ENCODE measurements at regions of chr16 and their contacts with region 1.

Region 1: DNA sequence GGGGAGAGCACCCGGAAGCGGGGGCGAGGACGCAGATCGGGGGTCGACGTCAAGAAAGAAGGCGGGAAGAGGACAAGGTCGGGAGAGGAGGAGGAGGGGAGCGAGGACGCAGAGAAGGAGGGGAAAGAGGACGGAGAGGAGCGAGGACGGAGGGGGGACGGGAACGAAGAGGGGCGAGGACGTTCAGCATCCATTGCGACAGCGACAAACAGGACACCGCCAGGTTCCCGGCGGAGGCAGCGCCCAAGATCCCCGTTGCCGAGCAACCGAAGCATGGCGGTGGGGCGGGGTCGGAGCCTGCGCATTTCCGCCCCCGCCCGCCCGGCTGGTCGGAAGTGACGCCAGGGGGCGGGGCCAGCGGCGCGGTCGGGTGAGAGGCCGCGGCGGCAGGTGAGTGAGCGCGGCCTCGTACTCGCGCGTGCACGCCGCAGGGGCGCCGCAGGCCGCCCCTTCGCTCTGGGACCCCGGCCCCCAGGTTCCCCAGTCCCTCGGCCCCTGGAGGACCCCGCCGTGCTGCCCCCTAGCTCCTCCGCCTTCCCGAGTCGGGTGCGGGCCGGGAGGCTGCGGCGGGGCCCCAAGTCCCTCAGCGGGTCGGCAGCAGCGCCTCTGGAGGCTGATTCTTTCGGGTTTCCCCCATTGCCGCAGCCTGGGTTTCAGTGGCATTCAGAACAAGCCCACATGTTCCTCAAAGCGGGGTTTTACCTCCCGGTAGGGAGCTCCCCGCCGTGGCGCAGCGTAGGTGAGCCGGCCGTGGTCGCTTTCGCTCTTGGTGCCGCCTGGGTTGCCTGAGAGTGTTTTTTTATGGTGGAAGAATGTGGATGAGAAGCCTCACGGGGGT is at the start of gene FAM234A:
- DNase-seq: peak; percentile 88 to 99 (median 94)
- ATAC-seq: peak; percentile 87
- H3K4me3 ChIP-seq: peak within 1 kb of the TSS; percentile 62
- H3K4me3 Mint-ChIP-seq: peak within 1 kb of the TSS; percentile 93
- H3K27ac ChIP-seq: peak within 1 kb of the TSS; percentile 98
- H3K27ac Mint-ChIP-seq: peak within 1 kb of the TSS; percentile 100
- H3K4me1 ChIP-seq: peaks cover 20% of the 10 kb centered on the region
- H3K4me1 Mint-ChIP-seq: peaks cover 17% of the 10 kb centered on the region
- H3K27me3 ChIP-seq: no peaks in the 10 kb centered on the region
- H3K27me3 Mint-ChIP-seq: no peaks in the 10 kb centered on the region
- CTCF ChIP-seq: peak; percentile 63
- total RNA-seq, gene FAM234A: 15.6 to 17.0 TPM

Region 2: GRCh38 chr16:53346-54236 is 181.1 kb before region 1 on chr16 and contains the starts of genes POLR3K and SNRNP25:
- CTCF ChIA-PET with region 1: no interaction called
- POLR2A ChIA-PET with region 1: no interaction called
- intact Hi-C with region 1: loop called in 1 of 2 experiments (anchors 1 kb)
- DNase-seq: peak; percentile 95 to 99 (median 98)
- ATAC-seq: peak; percentile 95
- H3K4me3 ChIP-seq: peak within 1 kb of the TSS; percentile 86
- H3K4me3 Mint-ChIP-seq: peak within 1 kb of the TSS; percentile 94
- H3K27ac ChIP-seq: peak within 1 kb of the TSS; percentile 25 to 31
- H3K27ac Mint-ChIP-seq: peak within 1 kb of the TSS; percentile 72
- H3K4me1 ChIP-seq: peaks cover 33% of the 10 kb centered on the region
- H3K4me1 Mint-ChIP-seq: peaks cover 32% of the 10 kb centered on the region
- H3K27me3 ChIP-seq: no peaks in the 10 kb centered on the region
- H3K27me3 Mint-ChIP-seq: no peaks in the 10 kb centered on the region
- CTCF ChIP-seq: no peak
- total RNA-seq, gene POLR3K: 4.1 TPM
- total RNA-seq, gene SNRNP25: 4.8 to 5.1 TPM

Region 3: GRCh38 chr16:138049-138417 is 96.7 kb before region 1 on chr16:
- CTCF ChIA-PET with region 1: no interaction called
- POLR2A ChIA-PET with region 1: no interaction called
- intact Hi-C with region 1: loop called in 1 of 2 experiments (anchors 2 kb)
- DNase-seq: peak in 12 of 14 experiments; percentile 7 to 56 (median 20)
- ATAC-seq: no peak
- H3K4me3 ChIP-seq: peak overlapping the region; percentile 66
- H3K4me3 Mint-ChIP-seq: peak overlapping the region; percentile 89
- H3K27ac ChIP-seq: peak overlapping the region in 1 of 2 donors; percentile 46
- H3K27ac Mint-ChIP-seq: peak overlapping the region; percentile 95
- H3K4me1 ChIP-seq: peaks cover 17% of the 10 kb centered on the region
- H3K4me1 Mint-ChIP-seq: peaks cover 25% of the 10 kb centered on the region
- H3K27me3 ChIP-seq: no peaks in the 10 kb centered on the region
- H3K27me3 Mint-ChIP-seq: no peaks in the 10 kb centered on the region
- CTCF ChIP-seq: no peak

Region 4: DNA sequence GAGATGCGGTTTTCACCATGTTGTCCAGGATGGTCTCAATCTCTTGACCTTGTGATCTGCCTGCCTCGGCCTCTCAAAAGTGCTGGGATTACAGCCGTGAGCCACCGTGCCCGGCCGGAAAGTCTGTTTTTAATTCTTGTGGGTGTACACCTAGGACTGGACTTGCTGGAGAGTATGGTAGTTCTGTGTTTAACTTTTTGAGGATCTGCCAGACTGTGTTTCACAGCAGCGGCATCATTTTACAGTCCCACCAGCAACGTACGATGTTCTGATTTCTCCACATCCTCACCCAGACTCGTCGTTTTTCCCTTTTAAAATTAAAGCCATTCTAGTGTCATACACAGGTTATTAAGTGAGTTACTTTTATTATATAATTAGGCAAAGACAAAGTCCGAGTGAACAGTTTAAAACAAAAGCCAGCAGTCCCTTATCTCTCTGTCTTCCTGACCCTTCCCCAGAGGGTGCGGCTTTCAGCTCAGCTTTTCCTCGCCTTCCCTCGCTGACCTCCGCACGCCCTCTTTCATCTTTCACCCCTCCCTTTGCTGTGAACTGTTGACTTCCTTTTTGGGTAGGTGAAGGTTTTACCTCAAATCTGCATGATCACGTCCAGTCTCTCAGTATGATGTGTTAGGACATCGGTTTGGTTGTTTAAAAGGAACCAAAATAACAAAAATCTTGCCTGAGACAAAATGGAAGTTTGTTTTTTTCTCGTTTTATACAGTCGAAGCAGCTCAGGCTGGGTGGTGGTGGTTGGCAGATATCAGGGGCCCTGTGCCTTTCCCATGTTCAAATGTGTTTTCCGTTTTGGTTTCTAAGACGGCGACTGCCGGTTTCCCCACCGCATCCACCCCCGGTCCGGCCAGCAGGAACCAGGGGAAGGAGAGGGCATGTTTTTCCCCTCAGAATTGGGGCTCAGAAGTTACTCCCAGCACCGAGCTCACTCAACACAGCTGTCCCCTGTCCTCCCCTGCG is 18.0 kb after region 1 on chr16:
- CTCF ChIA-PET with region 1: interaction called, 4 read pairs
- POLR2A ChIA-PET with region 1: interaction called, 29 read pairs
- intact Hi-C with region 1: no loop called
- DNase-seq: peak in 4 of 14 experiments; percentile 27 to 50 (median 48)
- ATAC-seq: peak; percentile 63
- H3K4me3 ChIP-seq: peak overlapping the region; percentile 31
- H3K4me3 Mint-ChIP-seq: peak overlapping the region; percentile 89
- H3K27ac ChIP-seq: peak overlapping the region; percentile 48 to 67
- H3K27ac Mint-ChIP-seq: peak overlapping the region; percentile 88
- H3K4me1 ChIP-seq: peaks cover 35% of the 10 kb centered on the region
- H3K4me1 Mint-ChIP-seq: peaks cover 29% of the 10 kb centered on the region
- H3K27me3 ChIP-seq: no peaks in the 10 kb centered on the region
- H3K27me3 Mint-ChIP-seq: no peaks in the 10 kb centered on the region
- CTCF ChIP-seq: no peak

Measured in CD4-positive, alpha-beta T cell (primary cell).